Heart left ventricle (tissue), 16 donors: ENCODE measurements at regions of chr5 and their contacts with region 1.

Region 1: DNA sequence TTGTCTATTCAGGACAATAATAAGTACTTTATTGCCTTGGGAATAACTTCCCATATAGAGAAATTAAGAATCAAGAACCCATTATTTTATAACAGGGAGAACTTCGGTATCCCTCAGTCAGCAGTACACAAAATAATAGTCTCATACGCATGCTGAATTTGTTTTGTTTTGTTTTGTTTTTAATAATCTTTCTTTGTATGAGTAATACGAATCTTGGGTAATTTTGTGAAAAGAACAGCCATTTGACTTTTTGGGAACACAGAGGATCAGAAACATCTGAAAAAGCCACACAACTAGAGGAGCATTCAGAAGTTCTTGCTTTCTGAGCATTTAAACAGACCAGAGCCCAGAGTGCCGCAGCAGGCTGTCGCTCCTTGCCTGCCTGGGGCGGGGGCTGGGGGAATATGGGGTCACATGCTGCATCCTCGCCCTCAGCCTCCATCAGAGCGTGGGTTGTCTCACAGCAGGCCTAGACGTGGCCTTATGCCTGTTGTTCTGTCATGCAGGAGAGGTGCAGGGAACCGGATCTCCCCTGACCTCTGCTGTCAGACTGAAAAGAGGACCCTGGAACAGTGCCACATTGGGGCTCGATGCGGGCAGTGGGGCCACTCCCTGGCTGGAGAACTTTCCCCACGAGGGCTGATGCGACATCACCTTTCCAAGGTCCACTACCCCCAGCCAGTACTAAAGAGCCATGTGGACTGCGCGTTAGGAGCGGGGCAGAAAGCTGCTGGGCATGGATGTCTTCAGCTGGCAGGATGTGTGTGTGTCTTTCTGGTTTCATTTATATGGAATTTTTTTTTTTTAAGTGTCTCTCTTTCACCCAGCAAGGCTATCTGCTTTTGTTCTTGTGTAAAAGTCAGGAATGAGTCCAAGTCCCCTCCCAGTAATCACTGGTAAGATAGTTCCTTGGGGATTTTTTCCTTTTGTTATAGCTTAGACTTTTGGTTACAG is 133.4 kb upstream of the OTULINL start:
- DNase-seq: peak in 4 of 5 donors; percentile 39 to 54 (median 48)
- ATAC-seq: peak in 3 of 4 donors; percentile 35 to 49 (median 40)
- H3K4me3 ChIP-seq: no peak overlapping the region
- H3K27ac ChIP-seq: peak overlapping the region; percentile 42 to 87 (median 77)
- H3K4me1 ChIP-seq: peaks cover 14 to 98% (median 69%) of the 10 kb centered on the region in 12 donors
- H3K27me3 ChIP-seq: no peaks in the 10 kb centered on the region
- CTCF ChIP-seq: no peak
- POLR2A ChIP-seq: no peak

Region 2: GRCh38 chr5:14399054-14399692 is 49.1 kb before region 1 on chr5:
- intact Hi-C with region 1: loop called in 1 of 10 experiments (anchors 5 kb)
- DNase-seq: no peak
- ATAC-seq: peak in 2 of 4 donors; percentile 50
- H3K4me3 ChIP-seq: no peak overlapping the region
- H3K27ac ChIP-seq: peak overlapping the region in 2 of 12 donors; percentile 11 to 28
- H3K4me1 ChIP-seq: peaks cover 0 to 29% (median 8%) of the 10 kb centered on the region in 12 donors
- H3K27me3 ChIP-seq: no peaks in the 10 kb centered on the region
- CTCF ChIP-seq: peak; percentile 52 to 85 (median 75)
- POLR2A ChIP-seq: no peak

Region 3: GRCh38 chr5:14405267-14405666 is 43.0 kb before region 1 on chr5:
- intact Hi-C with region 1: loop called in 3 of 10 experiments (anchors 5 kb)
- DNase-seq: no peak
- ATAC-seq: no peak
- H3K4me3 ChIP-seq: no peak overlapping the region
- H3K27ac ChIP-seq: peak overlapping the region in 2 of 12 donors; percentile 11 to 32
- H3K4me1 ChIP-seq: peaks cover 0 to 48% (median 22%) of the 10 kb centered on the region in 12 donors
- H3K27me3 ChIP-seq: no peaks in the 10 kb centered on the region
- CTCF ChIP-seq: peak in 3 of 12 donors; percentile 23 to 31 (median 27)
- POLR2A ChIP-seq: no peak

Region 4: DNA sequence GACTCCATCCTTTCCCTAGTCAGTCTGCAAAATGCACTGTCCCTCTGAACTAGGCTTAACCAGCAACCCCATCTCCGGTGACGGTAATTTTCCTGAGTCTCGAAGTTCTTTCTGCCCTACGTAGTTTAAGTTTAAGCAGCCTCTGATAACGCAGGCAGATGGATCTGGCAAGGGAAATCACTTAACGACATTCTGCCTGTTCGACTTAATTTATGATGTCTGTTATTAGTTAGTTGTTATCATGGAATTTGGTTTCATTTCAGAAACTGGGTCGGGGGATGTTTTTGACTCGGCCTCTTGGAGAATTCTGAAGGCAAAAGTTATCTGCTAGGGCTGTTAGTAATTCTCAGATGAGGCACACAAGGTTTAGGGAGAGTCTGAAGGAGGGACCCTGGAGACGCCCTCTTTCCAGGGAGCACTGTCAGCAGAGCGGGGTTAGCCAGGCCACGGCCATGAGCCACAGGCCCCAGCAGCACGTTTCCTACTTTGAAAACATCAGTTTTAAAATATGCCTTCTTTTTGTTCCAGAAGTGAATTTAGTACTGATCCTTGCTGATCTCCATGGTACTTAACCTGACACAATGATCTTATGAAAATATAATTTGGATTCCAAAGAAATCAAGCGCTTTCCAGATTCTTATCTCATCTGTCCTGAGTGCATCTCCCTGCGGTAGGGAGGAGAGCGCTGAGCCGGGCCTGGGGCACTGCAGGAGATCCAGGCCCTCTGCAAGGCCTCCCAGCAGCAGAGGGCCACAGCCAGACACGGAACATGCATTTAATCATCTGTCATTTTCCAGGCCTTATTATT is 37.6 kb before region 1 on chr5:
- intact Hi-C with region 1: loop called in 2 of 10 experiments (anchors 5 kb)
- DNase-seq: no peak
- ATAC-seq: peak in 3 of 4 donors; percentile 47 to 58 (median 49)
- H3K4me3 ChIP-seq: no peak overlapping the region
- H3K27ac ChIP-seq: peak overlapping the region; percentile 46 to 75 (median 55)
- H3K4me1 ChIP-seq: peaks cover 0 to 49% (median 20%) of the 10 kb centered on the region in 12 donors
- H3K27me3 ChIP-seq: no peaks in the 10 kb centered on the region
- CTCF ChIP-seq: no peak
- POLR2A ChIP-seq: no peak

Region 5: DNA sequence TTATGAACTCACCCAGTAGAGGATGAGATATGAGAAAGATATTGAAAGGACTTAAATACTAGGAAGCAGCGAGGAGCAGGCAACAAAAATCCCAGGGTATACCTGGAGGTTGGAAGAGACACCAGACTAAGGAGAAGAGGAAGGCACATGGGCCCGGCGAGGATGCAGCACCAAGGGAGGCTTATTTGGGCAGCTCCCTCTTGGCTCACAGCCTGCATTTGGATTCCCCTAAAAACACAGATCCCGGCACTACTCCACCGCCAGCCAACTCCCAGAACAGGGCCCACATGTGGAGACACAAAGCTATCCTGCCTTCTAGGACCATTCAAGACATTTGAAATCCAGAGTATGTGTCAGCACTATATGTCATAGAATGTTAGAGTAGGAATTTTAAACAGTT is 851.9 kb after region 1 on chr5:
- intact Hi-C with region 1: no loop called
- DNase-seq: no peak
- ATAC-seq: no peak
- H3K4me3 ChIP-seq: no peak overlapping the region
- H3K27ac ChIP-seq: no peak overlapping the region
- H3K4me1 ChIP-seq: peaks cover 0 to 2% (median 0%) of the 10 kb centered on the region in 12 donors
- H3K27me3 ChIP-seq: no peaks in the 10 kb centered on the region
- CTCF ChIP-seq: no peak
- POLR2A ChIP-seq: no peak